Heart right ventricle (tissue), 16 donors: ENCODE measurements at regions of chr5 and their contacts with region 1.

Region 1: DNA sequence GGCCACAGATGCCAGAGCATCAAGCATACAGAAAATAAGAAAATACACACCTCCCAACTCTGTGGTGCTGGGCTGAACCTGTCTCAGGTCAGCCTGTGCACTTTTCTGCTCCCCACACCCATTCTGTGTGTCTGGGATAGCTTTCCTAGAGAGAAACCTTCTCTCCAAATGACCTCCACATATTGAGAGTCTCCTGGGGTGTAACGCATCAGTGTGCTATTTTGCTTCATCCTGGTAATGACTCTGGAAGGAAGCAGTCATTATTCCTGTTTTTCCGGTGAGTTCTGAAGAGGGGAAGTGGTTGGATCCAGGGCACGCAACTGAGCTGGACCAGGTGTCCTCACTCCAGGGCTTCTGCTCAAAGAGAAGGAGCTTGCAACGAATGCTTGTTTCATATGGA is 73.2 kb upstream of the SH3PXD2B start:
- DNase-seq: no peak
- ATAC-seq: peak; percentile 51 to 85 (median 74)
- H3K4me3 ChIP-seq: no peak overlapping the region
- H3K27ac ChIP-seq: peak overlapping the region in 9 of 10 donors; percentile 24 to 75 (median 57)
- H3K4me1 ChIP-seq: peaks cover 0 to 53% (median 16%) of the 10 kb centered on the region in 9 donors
- H3K27me3 ChIP-seq: no peaks in the 10 kb centered on the region
- CTCF ChIP-seq: no peak

Region 2: DNA sequence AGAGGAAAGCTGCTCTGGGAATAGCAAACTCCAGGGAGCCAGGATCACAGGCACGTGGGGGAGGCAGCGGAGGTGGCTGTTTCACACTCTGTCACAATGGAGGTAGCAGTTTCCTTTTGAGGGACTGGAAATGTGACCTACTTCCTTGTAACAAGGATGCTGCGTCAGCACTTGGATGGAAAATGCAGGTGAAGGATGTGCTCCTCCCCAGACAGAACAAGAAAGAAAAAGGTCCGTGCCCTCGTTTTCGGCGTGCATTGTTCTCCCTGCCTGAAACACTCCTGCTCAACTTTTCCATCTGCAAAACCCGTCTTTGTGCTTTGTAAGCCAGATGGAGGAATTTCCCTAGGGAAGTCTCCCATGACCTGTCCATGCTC is 18.2 kb before region 1 on chr5:
- intact Hi-C with region 1: loop called in 1 of 10 experiments (anchors 2 kb)
- DNase-seq: peak; percentile 31 to 81
- ATAC-seq: peak; percentile 38 to 84 (median 75)
- H3K4me3 ChIP-seq: no peak overlapping the region
- H3K27ac ChIP-seq: peak overlapping the region; percentile 53 to 92 (median 82)
- H3K4me1 ChIP-seq: peaks cover 2 to 44% (median 23%) of the 10 kb centered on the region in 9 donors
- H3K27me3 ChIP-seq: no peaks in the 10 kb centered on the region
- CTCF ChIP-seq: no peak